GM18951 (cell line): ENCODE measurements at regions of chrX and their contacts with region 1.

Region 1: DNA sequence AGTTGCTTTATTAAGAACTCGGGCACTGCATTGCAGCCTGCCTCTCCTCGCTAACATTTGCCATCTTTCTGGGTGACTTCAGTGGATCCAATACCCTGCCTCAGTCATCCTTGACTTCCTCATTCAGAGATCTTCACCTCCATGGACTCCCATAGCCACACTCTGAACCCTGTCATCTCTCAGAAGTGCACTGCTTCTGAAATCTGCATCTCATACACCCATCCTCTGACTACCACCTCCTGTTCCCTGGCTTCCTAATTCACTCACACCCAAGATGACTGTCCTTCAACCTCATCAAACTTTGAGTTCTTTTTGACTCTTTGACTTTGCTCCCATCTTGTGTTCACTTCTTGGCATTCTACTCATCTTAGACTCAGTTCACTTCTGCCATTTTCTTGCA is 25.3 kb upstream of the CYBB start:
- POLR2A ChIP-seq: no peak

Region 2: GRCh38 chrX:37824505-37825208 is 70.1 kb after region 1 on chrX:
- in situ Hi-C with region 1: loop called (anchors 5 kb)
- POLR2A ChIP-seq: no peak

Region 3: GRCh38 chrX:38103857-38104812 is 349.6 kb after region 1 on chrX:
- in situ Hi-C with region 1: no loop called
- POLR2A ChIP-seq: no peak